ENCODE measurements at regions of chr6 and their contacts with region 1.

Region 1: DNA sequence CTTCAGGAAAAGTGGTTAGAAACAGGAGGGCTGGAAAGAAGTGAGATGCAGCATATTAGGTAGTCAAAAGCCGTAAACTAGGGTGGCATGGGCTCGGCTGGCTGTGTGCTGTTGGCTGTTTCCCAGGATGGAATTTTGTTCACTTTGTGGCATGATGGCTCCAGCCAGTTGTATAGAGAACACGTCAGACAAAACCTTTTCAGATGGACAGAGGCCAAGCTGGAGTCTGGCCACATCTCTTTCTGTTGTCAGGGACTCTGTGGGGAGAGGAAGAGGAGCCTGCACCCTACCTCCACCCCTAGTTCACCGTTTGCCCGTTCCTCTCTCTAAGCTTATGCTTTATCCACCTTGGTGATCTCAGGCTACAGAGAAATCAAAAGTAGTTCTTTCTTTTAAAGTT is 22.0 kb downstream of the C6orf89 start:
- DNase-seq: peak in 1 of 2 donors; percentile 60
- H3K4me3 ChIP-seq: no peak overlapping the region
- H3K27ac ChIP-seq: peak overlapping the region; percentile 21 to 52
- H3K4me1 ChIP-seq: peaks cover 0 to 16% of the 10 kb centered on the region in 2 donors
- H3K27me3 ChIP-seq: no peaks in the 10 kb centered on the region
- CTCF ChIP-seq: no peak
- POLR2A ChIP-seq: no peak

Region 2: DNA sequence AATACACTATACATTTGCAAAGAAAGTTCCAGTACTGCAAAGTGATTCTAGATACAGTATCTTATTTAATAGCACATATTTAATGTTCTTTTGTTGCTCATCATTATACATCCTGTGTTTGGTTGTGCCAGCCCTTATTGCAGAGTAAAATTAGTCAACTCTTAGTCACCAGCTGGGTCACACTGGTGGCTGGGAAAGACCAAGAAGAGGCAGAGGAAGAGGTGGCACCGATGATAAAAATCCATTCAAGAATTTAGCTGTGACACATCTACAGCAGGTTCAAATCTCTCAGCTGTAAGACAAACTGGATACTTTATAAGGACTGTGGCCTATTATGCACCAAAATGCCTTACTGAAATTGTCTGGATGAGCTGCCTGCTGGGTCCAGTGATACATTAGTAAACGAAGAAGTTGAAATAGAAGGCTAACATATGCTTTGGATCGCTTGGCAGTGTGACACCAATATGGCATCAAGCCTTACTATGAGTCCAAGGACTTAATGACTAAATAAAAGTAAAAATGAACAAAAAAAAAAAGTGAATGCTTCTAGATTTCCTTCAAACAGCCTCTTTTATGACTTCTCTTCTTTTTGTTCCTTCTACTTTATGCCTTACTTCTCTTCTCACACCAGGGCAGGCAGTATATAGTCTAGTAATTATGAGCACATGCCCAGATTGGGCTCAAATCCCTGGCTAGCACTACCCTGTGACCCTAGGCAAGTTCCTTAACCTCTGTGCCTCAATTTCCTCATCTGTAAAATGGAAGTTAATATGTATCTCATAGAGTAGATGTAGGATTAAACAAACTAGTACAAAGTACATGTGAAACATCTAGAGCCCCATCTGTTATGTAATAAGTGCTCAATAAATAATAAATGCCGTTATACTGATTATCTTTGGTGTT is 416.6 kb after region 1 on chr6:
- intact Hi-C with region 1: loop called (anchors 5 kb)
- DNase-seq: no peak
- H3K4me3 ChIP-seq: no peak overlapping the region
- H3K27ac ChIP-seq: no peak overlapping the region
- H3K4me1 ChIP-seq: no peaks in the 10 kb centered on the region
- H3K27me3 ChIP-seq: no peaks in the 10 kb centered on the region
- CTCF ChIP-seq: no peak
- POLR2A ChIP-seq: no peak